Posterior cingulate gyrus (tissue), 11 donors: ENCODE measurements at regions of chr10 and their contacts with region 1.

Region 1: GRCh38 chr10:3239066-3239919 is 66.7 kb upstream of the PITRM1 start:
- DNase-seq: peak; percentile 35 to 95 (median 76)

Region 2: DNA sequence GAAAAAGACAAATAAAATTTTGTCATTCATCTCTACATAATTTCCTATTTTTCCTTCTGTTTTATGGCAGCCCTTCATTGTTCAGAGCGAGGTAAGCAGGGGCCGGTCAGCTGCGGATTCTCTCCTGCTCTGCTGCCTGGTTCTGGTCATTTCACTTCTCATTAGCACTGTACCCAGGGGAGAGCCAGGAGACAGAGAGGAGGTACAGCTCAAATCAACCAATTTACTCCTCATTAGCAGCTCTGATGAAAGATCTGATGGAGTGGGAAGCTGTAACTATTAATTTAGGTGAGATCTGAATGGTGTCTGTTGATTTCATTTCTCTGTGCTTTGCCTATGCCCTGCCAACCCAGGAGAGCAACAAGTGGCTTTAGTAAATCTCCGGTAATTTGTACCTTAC is 413.5 kb before region 1 on chr10:
- intact Hi-C with region 1: no loop called
- DNase-seq: no peak

Region 3: DNA sequence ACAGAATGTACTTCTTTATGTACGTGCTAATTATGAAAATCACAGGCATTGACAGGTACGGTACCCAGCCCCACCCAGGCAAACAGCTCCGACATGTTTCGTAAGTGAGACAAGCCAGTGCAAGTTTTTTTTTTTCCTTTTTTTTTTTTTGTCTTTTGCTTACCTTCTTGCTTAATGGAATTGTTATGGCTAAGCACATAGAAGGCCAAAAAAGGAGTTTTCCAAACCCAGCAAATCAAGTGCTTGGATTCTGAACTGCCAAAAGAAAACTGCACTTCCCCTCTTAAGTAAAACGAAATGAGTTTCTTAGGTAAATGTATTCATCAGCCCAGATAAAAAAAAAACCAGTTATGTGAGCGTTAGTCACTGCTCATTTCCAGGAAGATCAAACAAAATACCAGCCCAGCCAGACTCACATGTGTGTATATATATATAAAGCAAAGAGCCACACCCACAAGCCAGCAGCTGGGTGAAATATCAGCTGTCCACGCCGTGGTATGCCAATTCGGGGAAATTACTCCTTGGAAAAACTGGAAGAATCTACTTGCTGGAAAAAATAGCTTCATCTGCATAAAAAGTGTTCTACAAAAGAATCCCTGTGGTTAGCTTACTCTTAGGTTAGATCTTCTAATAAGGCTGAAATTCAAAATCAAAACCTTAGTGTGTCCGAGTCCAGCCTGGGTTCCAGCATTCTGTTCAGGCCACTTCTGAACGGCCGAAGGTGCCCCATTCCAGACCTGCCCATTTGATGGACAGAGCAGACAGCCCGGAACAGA is 537.7 kb after region 1 on chr10:
- intact Hi-C with region 1: loop called (anchors 5 kb)
- DNase-seq: peak in 1 of 10 donors; percentile 59

Region 4: DNA sequence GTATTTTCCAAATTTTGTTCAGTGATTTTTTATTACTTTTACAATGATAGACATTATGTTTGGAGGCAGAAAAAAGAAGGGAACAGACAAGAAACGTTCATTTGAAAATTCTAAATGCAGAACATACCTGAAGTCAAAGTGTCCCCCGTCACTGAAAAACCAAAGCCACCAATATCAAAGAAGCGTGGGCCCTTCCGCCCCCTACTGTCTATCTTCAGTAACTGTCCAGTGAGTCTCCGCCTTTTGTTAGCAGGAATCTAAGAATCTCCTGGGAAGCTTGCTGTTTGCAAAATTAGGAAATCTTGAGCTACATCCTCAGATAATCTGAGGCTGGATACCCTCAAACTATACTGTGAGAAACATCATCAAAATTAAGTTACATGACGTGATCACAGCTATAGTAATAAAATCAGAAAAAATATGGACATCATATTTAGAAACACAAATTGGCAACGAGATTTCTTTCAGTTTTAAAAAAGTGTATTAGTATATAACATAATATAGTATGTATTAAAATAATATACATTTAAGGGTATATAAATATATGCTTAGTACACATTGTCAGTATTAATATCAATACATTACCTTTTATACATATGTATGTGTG is 1417.4 kb after region 1 on chr10:
- intact Hi-C with region 1: loop called (anchors 2 kb)
- DNase-seq: peak in 9 of 10 donors; percentile 28 to 87 (median 57)

Region 5: DNA sequence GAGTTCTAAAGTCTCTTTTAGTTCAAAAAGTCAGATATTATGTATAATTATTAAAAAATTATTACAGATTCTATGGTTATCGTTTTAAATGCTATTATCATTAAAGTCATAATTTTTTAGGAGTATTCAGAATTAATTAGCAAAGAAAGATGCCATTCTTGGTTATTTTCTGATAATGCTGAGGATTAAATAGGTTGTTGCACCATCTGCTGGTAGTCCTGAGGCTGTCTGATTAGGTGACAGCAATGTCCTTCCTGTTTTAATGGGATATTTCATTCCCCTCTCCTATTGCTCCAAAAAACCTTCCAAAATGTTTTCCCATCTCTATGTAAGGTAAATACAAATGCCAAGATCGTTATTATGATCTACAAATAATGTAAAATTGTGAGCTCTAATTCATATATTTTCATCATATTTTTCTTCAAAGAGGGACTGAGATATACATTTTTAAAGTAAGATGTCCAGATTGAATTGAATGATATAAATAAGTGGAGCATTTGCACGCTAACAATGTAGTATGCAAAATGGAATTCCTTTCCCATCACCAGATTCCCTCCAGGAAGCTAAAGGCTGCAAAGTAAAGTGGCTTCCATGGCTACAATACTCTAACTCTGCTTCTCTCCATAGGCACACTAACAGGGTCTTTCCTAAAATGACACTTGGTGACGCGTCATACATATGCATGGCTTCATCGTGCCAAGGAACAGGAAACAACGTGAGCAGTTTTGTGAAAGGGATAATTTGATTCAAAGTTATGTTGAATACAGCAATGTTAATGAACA is 1527.9 kb after region 1 on chr10:
- intact Hi-C with region 1: loop called (anchors 1 kb)
- DNase-seq: peak in 1 of 10 donors; percentile 11